ENCODE measurements at regions of chr20 and their contacts with region 1.

Region 1: GRCh38 chr20:40990542-40991120 is 38.0 kb upstream of the TOP1 start:
- DNase-seq: peak; percentile 71
- ATAC-seq: peak; percentile 20
- H3K4me3 ChIP-seq: no peak overlapping the region
- H3K4me3 Mint-ChIP-seq: peak overlapping the region; percentile 86
- H3K27ac ChIP-seq: peak overlapping the region; percentile 35 to 51
- H3K27ac Mint-ChIP-seq: peak overlapping the region; percentile 99
- H3K4me1 ChIP-seq: peaks cover 43 to 48% of the 10 kb centered on the region in 2 donors
- H3K4me1 Mint-ChIP-seq: peaks cover 51% of the 10 kb centered on the region
- H3K27me3 ChIP-seq: no peaks in the 10 kb centered on the region
- H3K27me3 Mint-ChIP-seq: no peaks in the 10 kb centered on the region
- CTCF ChIP-seq: peak; percentile 53

Region 2: DNA sequence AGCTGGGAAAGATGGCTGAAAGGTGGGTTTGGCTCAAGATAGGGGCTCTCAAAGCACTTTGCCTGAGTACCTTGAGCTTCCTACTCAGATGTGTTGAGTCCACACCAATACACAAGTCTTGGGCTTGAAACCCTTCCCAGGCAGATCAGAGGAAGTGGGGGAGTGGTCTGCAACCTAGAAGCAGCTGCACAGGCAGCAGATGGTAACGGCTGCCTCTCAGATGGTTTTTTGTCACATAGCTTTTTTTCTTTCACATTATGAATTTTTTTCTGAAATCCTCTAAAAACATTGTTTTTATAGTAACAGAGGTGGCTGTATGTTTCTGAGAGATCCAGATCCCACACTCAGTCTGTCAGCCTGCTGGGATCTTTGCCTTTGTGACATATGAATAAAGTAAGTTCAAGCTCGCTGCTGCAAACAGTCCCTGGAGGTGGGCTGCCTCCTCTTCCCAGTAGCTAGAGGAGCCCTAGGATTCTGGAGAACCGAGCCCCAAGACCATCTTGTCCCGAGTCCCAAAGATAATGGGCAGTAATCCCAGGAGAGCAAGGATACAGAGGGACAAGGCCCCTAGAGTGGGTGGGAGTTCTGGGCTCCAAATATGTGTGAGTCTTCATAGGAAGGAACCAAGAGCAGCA is 59.1 kb before region 1 on chr20:
- CTCF ChIA-PET with region 1: no interaction called
- POLR2A ChIA-PET with region 1: no interaction called
- intact Hi-C with region 1: no loop called
- DNase-seq: no peak
- ATAC-seq: no peak
- H3K4me3 ChIP-seq: no peak overlapping the region
- H3K4me3 Mint-ChIP-seq: no peak overlapping the region
- H3K27ac ChIP-seq: no peak overlapping the region
- H3K27ac Mint-ChIP-seq: no peak overlapping the region
- H3K4me1 ChIP-seq: no peaks in the 10 kb centered on the region
- H3K4me1 Mint-ChIP-seq: peaks cover 11% of the 10 kb centered on the region
- H3K27me3 ChIP-seq: no peaks in the 10 kb centered on the region
- H3K27me3 Mint-ChIP-seq: peaks cover 3% of the 10 kb centered on the region
- CTCF ChIP-seq: no peak

Region 3: DNA sequence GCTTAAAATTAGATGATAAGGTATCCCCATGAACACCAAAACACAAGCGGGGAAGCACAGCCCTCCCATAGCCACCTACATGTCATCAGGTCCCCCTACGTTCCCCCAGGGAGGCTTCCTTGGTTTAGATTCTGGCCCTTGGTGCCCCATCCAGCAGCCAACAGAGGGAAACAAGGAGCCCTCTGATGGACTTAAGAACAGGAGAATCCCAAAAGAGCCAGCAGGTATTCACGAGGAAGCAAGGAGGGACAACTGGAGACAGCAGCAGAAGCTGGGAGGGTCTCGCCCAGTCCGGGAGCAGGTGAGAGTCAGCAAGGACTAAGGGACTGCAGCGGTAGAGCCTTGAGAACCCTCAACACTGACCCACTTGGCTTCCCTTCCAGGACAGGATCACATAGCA is 20.4 kb before region 1 on chr20:
- CTCF ChIA-PET with region 1: interaction called, 89 read pairs
- POLR2A ChIA-PET with region 1: no interaction called
- intact Hi-C with region 1: loop called (anchors 1 kb)
- DNase-seq: no peak
- ATAC-seq: no peak
- H3K4me3 ChIP-seq: no peak overlapping the region
- H3K4me3 Mint-ChIP-seq: no peak overlapping the region
- H3K27ac ChIP-seq: no peak overlapping the region
- H3K27ac Mint-ChIP-seq: no peak overlapping the region
- H3K4me1 ChIP-seq: peaks cover 0 to 9% of the 10 kb centered on the region in 2 donors
- H3K4me1 Mint-ChIP-seq: peaks cover 12% of the 10 kb centered on the region
- H3K27me3 ChIP-seq: peaks cover 0 to 5% (median 2%) of the 10 kb centered on the region in 4 experiments
- H3K27me3 Mint-ChIP-seq: peaks cover 4% of the 10 kb centered on the region
- CTCF ChIP-seq: no peak

Region 4: GRCh38 chr20:41017390-41018042 is 26.9 kb after region 1 on chr20:
- CTCF ChIA-PET with region 1: interaction called, 62 read pairs
- POLR2A ChIA-PET with region 1: interaction called, 32 read pairs
- intact Hi-C with region 1: no loop called
- DNase-seq: no peak
- ATAC-seq: no peak
- H3K4me3 ChIP-seq: no peak overlapping the region
- H3K4me3 Mint-ChIP-seq: no peak overlapping the region
- H3K27ac ChIP-seq: no peak overlapping the region
- H3K27ac Mint-ChIP-seq: no peak overlapping the region
- H3K4me1 ChIP-seq: peaks cover 5 to 7% of the 10 kb centered on the region in 2 donors
- H3K4me1 Mint-ChIP-seq: peaks cover 10% of the 10 kb centered on the region
- H3K27me3 ChIP-seq: no peaks in the 10 kb centered on the region
- H3K27me3 Mint-ChIP-seq: no peaks in the 10 kb centered on the region
- CTCF ChIP-seq: no peak

Region 5: DNA sequence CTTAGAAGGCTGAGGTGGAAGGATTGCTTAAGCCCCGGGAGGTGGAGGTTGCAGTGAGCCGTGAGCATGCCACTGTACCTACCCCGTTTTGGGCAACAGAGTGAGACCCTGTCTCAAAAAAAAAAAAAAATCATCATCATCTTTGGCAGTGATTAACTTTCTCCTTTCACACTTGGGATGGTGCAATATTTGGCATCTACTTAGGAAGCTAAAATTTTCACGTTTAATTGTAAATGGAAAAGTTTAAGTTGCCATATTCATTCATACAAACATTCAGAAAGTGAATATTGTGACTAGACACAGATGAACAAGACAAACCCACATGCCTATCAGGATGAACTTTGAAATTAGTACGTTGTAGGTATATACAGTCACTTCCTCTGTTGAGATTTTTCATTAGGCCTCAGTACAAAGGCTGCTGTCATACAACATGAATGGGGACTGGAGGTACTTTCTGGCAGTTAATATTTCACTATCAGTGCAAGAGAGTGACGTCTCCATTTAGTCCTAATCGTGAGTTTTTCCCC is 48.3 kb after region 1 on chr20:
- CTCF ChIA-PET with region 1: interaction called, 71 read pairs
- POLR2A ChIA-PET with region 1: no interaction called
- intact Hi-C with region 1: no loop called
- DNase-seq: no peak
- ATAC-seq: no peak
- H3K4me3 ChIP-seq: no peak overlapping the region
- H3K4me3 Mint-ChIP-seq: no peak overlapping the region
- H3K27ac ChIP-seq: no peak overlapping the region
- H3K27ac Mint-ChIP-seq: no peak overlapping the region
- H3K4me1 ChIP-seq: peaks cover 0 to 7% of the 10 kb centered on the region in 2 donors
- H3K4me1 Mint-ChIP-seq: peaks cover 63% of the 10 kb centered on the region
- H3K27me3 ChIP-seq: no peaks in the 10 kb centered on the region
- H3K27me3 Mint-ChIP-seq: no peaks in the 10 kb centered on the region
- CTCF ChIP-seq: no peak

Region 6: GRCh38 chr20:41078329-41078728 is 87.7 kb after region 1 on chr20:
- CTCF ChIA-PET with region 1: interaction called, 80 read pairs
- POLR2A ChIA-PET with region 1: no interaction called
- intact Hi-C with region 1: loop called (anchors 1 kb)
- DNase-seq: peak; percentile 56
- ATAC-seq: peak; percentile 51
- H3K4me3 ChIP-seq: no peak overlapping the region
- H3K4me3 Mint-ChIP-seq: peak overlapping the region; percentile 35
- H3K27ac ChIP-seq: no peak overlapping the region
- H3K27ac Mint-ChIP-seq: no peak overlapping the region
- H3K4me1 ChIP-seq: peaks cover 11 to 14% of the 10 kb centered on the region in 2 donors
- H3K4me1 Mint-ChIP-seq: peaks cover 34% of the 10 kb centered on the region
- H3K27me3 ChIP-seq: no peaks in the 10 kb centered on the region
- H3K27me3 Mint-ChIP-seq: no peaks in the 10 kb centered on the region
- CTCF ChIP-seq: no peak

Region 7: GRCh38 chr20:41117014-41117413 is 126.4 kb after region 1 on chr20:
- CTCF ChIA-PET with region 1: no interaction called
- POLR2A ChIA-PET with region 1: interaction called, 10 read pairs
- intact Hi-C with region 1: no loop called
- DNase-seq: no peak
- ATAC-seq: no peak
- H3K4me3 ChIP-seq: no peak overlapping the region
- H3K4me3 Mint-ChIP-seq: no peak overlapping the region
- H3K27ac ChIP-seq: no peak overlapping the region
- H3K27ac Mint-ChIP-seq: no peak overlapping the region
- H3K4me1 ChIP-seq: no peaks in the 10 kb centered on the region
- H3K4me1 Mint-ChIP-seq: peaks cover 3% of the 10 kb centered on the region
- H3K27me3 ChIP-seq: no peaks in the 10 kb centered on the region
- H3K27me3 Mint-ChIP-seq: no peaks in the 10 kb centered on the region
- CTCF ChIP-seq: no peak

Region 8: GRCh38 chr20:41232973-41233926 is 242.6 kb after region 1 on chr20:
- CTCF ChIA-PET with region 1: no interaction called
- POLR2A ChIA-PET with region 1: no interaction called
- intact Hi-C with region 1: no loop called
- DNase-seq: no peak
- ATAC-seq: peak; percentile 41
- H3K4me3 ChIP-seq: no peak overlapping the region
- H3K4me3 Mint-ChIP-seq: peak overlapping the region; percentile 17
- H3K27ac ChIP-seq: no peak overlapping the region
- H3K27ac Mint-ChIP-seq: peak overlapping the region; percentile 8
- H3K4me1 ChIP-seq: peaks cover 9 to 15% of the 10 kb centered on the region in 2 donors
- H3K4me1 Mint-ChIP-seq: peaks cover 26% of the 10 kb centered on the region
- H3K27me3 ChIP-seq: no peaks in the 10 kb centered on the region
- H3K27me3 Mint-ChIP-seq: no peaks in the 10 kb centered on the region
- CTCF ChIP-seq: no peak

Measured in B cell (primary cell).